GM10248 (cell line): ENCODE measurements at regions of chr2 and their contacts with region 1.

Region 1: GRCh38 chr2:224284134-224284946 is 117.6 kb downstream of the FAM124B start:
- DNase-seq: peak; percentile 29
- CTCF ChIP-seq: peak; percentile 34

Region 2: GRCh38 chr2:222969491-222969890 is 1314.8 kb before region 1 on chr2:
- CTCF ChIA-PET with region 1: interaction called, 18 read pairs
- POLR2A ChIA-PET with region 1: no interaction called
- DNase-seq: no peak
- CTCF ChIP-seq: no peak

Region 3: DNA sequence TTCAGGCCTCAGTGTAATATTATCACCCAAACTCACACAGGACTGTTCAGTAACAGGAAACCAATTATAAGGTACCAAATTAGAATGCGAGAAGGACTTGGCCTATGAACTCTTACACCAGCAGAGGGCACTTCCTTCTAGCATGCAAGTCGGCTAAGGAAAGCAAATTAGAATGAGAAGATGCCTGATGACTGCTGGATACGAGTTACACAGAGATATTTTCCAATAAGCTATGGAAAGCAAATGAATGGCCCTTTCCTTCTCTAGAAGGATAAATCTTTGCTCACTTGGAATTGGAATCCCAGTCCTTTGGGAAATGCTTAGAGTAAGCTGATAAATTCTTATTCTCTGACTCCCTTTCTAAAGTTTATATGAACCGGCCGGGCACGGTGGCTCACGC is 556.8 kb before region 1 on chr2:
- CTCF ChIA-PET with region 1: interaction called, 12 read pairs
- POLR2A ChIA-PET with region 1: no interaction called
- DNase-seq: peak; percentile 70
- CTCF ChIP-seq: peak; percentile 75

Region 4: GRCh38 chr2:223957092-223957851 is 327.1 kb before region 1 on chr2 and contains the start of gene MRPL44:
- CTCF ChIA-PET with region 1: interaction called, 10 read pairs
- POLR2A ChIA-PET with region 1: no interaction called
- DNase-seq: peak; percentile 93
- CTCF ChIP-seq: no peak

Region 5: GRCh38 chr2:223970343-223971128 is 313.8 kb before region 1 on chr2:
- CTCF ChIA-PET with region 1: interaction called, 176 read pairs
- POLR2A ChIA-PET with region 1: no interaction called
- DNase-seq: peak; percentile 39
- CTCF ChIP-seq: peak; percentile 75

Region 6: GRCh38 chr2:223993621-223994232 is 290.6 kb before region 1 on chr2:
- CTCF ChIA-PET with region 1: interaction called, 115 read pairs
- POLR2A ChIA-PET with region 1: no interaction called
- DNase-seq: peak; percentile 73
- CTCF ChIP-seq: peak; percentile 82

Region 7: GRCh38 chr2:224268441-224268840 is 15.9 kb before region 1 on chr2:
- CTCF ChIA-PET with region 1: interaction called, 33 read pairs
- POLR2A ChIA-PET with region 1: no interaction called
- DNase-seq: no peak
- CTCF ChIP-seq: no peak